Dorsolateral prefrontal cortex (tissue), 120 donors: ENCODE measurements at regions of chr6 and their contacts with region 1.

Region 1: GRCh38 chr6:39850736-39851297 is 58.6 kb downstream of the DAAM2 start:
- DNase-seq: no peak
- H3K4me3 ChIP-seq: no peak overlapping the region
- H3K27ac ChIP-seq: peak overlapping the region in 48 of 59 donors; percentile 10 to 91 (median 80)
- H3K27me3 ChIP-seq: no peaks in the 10 kb centered on the region
- CTCF ChIP-seq: no peak

Region 2: DNA sequence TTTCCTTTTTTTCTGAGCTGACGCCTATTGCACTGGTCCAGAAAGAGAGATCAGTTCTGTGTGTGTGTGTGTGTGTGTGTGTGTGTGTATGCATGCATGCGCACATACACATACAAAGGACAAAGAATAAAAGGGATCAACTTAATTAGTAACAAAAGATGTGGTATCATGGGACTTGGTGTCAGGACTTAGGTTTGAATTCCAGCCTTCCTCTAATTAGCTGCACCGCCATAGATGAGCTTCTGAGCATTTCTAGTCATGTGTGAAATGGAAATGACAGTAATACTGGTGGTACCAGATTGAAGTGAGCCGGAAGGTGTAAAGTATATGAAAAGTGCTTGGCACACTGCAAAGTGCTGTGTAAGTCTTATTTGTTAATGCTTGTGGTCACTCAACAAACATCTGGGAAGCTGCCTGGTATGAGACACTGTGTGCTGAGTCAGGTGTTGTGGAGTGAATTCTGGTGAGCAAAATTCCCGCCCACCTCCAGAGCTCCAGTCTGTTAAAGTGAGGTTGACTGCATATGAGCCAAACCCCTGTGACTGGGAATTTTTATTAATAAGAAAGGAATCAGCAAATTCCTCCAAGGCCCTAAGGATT is 46.3 kb before region 1 on chr6:
- intact Hi-C with region 1: loop called in 1 of 2 experiments (anchors 5 kb)
- DNase-seq: no peak
- H3K4me3 ChIP-seq: peak overlapping the region in 4 of 59 donors; percentile 3 to 18 (median 12)
- H3K27ac ChIP-seq: peak overlapping the region in 46 of 59 donors; percentile 2 to 98 (median 62)
- H3K27me3 ChIP-seq: no peaks in the 10 kb centered on the region
- CTCF ChIP-seq: no peak

Region 3: DNA sequence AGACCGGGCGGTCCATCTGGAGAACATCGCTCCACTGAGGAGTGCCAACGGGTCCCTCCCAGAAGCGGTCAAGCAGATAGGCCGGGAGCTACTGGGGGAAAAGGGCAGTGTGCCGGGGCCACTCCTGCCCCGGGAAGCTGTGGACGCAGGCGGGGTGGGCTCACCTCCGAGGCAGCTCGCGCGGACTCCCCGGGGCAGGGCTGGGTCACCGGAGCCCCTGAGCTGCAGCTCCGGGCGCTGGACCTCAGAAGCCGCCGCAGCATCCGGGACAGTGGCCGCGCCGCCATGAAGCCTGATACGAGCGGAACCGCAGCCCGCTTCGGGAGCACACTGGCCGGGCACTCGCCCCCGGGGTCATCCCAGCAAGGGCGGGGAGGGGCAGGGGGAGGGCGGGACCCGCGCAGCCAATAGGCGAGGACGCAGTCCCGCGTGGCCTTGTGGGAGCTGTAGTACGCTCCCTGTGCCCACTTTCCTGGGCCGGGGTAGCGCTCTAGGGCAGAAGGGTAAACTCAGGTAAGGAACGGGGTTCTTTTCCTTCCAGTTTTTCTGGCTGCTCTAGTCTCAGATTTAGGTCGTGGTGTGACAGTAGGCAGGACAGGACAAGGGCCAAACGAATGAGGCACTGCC is 83.4 kb after region 1 on chr6 and contains the start of gene MOCS1:
- intact Hi-C with region 1: no loop called
- DNase-seq: peak; percentile 82 to 92 (median 88)
- H3K4me3 ChIP-seq: peak within 1 kb of the TSS; percentile 58 to 100 (median 91)
- H3K27ac ChIP-seq: peak within 1 kb of the TSS; percentile 47 to 97 (median 89)
- H3K27me3 ChIP-seq: no peaks in the 10 kb centered on the region
- CTCF ChIP-seq: peak in 29 of 56 donors; percentile 7 to 56 (median 27)
- total RNA-seq, gene MOCS1: 17.5 to 42.3 (median 25.3) TPM